Naive thymus-derived CD4-positive, alpha-beta T cell (primary cell): ENCODE measurements at regions of chr7 and their contacts with region 1.

Region 1: DNA sequence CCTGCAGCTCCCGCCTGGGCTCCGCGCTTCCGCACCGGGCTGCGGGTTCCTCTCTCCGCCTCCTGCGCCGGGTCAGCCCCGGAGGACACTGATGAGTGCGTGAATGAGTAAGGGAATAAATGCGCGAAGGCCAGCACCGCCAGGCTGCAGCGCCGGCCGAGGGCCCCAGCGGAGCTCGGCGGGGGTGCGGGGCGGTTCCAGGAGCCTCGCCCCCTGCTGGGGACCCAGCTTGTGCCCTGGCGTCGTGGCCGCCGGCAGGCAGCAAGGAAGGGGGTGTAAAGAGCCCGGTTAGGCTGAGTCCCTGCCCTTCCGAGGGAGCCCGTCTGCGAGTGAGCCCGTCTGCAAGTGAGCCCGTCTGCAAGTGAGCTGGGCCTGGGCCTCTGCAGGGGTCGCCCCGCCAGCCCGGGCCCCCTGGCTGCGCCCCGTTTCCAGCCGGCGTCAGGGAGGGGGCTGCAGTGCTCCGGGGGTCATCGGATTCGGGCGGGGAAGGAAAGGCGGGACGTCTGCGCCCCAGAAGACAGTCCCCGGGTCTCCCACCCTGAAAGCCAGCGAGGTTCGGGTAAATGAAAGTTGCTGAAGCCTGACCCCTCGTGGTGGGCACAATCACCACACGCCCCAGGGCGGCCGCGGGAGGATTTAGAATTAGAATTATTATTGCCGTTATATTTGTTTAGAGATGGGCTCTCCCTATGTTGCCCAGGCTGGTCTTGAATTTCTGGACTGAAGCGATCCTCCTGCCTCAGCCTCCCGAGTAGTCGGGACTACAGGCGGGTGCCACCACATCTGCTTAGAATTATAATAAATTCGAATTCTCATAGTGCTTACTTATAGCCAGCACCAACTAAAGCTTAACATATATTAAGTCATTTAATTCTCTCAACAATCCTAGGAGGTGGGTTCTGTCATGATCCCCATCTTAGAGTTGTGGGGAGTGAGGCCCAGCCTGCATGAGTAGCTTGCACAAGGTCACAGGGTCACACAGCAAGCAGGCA is 8.6 kb upstream of the CRYGN start:
- DNase-seq: peak; percentile 67 to 87 (median 83)
- ATAC-seq: peak; percentile 92
- H3K4me3 ChIP-seq: peak overlapping the region; percentile 68
- H3K4me3 Mint-ChIP-seq: peak overlapping the region; percentile 69 to 88 (median 80)
- H3K27ac ChIP-seq: peak overlapping the region; percentile 64
- H3K27ac Mint-ChIP-seq: peak overlapping the region in 6 of 9 donors; percentile 28 to 88 (median 42)
- H3K4me1 ChIP-seq: peaks cover 0 to 3% of the 10 kb centered on the region in 2 donors
- H3K4me1 Mint-ChIP-seq: peaks cover 0 to 32% (median 8%) of the 10 kb centered on the region in 7 donors
- H3K27me3 ChIP-seq: no peaks in the 10 kb centered on the region
- H3K27me3 Mint-ChIP-seq: peaks cover 0 to 23% (median 4%) of the 10 kb centered on the region in 5 donors

Region 2: GRCh38 chr7:151361193-151361959 is 87.2 kb before region 1 on chr7:
- CTCF ChIA-PET with region 1: interaction called, 130 read pairs
- POLR2A ChIA-PET with region 1: interaction called, 3 read pairs
- intact Hi-C with region 1: no loop called
- DNase-seq: no peak
- ATAC-seq: no peak
- H3K4me3 ChIP-seq: no peak overlapping the region
- H3K4me3 Mint-ChIP-seq: no peak overlapping the region
- H3K27ac ChIP-seq: no peak overlapping the region
- H3K27ac Mint-ChIP-seq: no peak overlapping the region
- H3K4me1 ChIP-seq: no peaks in the 10 kb centered on the region
- H3K4me1 Mint-ChIP-seq: peaks cover 0 to 14% (median 3%) of the 10 kb centered on the region in 7 donors
- H3K27me3 ChIP-seq: no peaks in the 10 kb centered on the region
- H3K27me3 Mint-ChIP-seq: no peaks in the 10 kb centered on the region

Region 3: DNA sequence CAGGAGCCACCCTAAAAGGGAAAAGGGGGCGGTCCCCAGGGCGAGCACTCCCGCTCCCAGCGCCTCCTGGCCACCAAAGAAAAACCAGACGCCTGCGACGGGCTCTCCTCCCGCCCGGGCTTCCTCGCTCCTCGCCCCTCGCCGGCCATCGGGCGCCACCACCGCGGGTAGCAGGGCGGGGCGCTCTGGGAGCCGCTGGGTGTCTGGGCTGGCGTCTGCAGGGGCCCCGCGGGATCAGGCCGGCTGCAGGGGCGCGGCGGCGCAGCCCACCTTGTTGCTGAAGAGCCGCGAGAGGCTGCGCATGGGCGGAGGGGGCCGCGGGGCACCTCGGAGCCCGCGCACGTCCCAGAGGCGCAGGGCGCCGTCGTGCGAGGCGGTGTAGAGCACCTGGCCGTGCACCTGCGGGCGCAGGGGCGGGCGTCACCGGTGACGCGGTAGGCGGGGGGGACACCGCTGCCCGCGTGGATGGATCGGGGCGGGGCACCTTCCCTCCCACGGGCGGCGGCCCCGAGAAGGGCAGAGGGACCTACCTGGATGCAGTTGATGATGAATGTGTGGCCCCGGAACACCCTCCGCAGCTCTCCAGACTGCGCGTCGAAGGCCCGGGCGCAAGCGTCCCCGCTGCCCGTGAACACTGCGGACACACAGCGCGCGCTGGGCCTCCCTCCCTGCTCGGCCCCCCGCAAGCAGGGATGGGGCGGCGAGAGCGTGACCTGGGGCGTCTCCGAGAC is 67.0 kb before region 1 on chr7:
- CTCF ChIA-PET with region 1: interaction called, 4 read pairs
- POLR2A ChIA-PET with region 1: interaction called, 3 read pairs
- intact Hi-C with region 1: loop called in 1 of 2 experiments (anchors 5 kb)
- DNase-seq: peak in 8 of 9 donors; percentile 39 to 72 (median 54)
- ATAC-seq: peak; percentile 86
- H3K4me3 ChIP-seq: peak overlapping the region; percentile 63
- H3K4me3 Mint-ChIP-seq: peak overlapping the region in 9 of 10 donors; percentile 16 to 90 (median 77)
- H3K27ac ChIP-seq: peak overlapping the region; percentile 62
- H3K27ac Mint-ChIP-seq: peak overlapping the region in 2 of 9 donors; percentile 36 to 80
- H3K4me1 ChIP-seq: peaks cover 12 to 19% of the 10 kb centered on the region in 2 donors
- H3K4me1 Mint-ChIP-seq: peaks cover 6 to 14% (median 9%) of the 10 kb centered on the region in 7 donors
- H3K27me3 ChIP-seq: peaks cover 0 to 6% of the 10 kb centered on the region in 2 donors
- H3K27me3 Mint-ChIP-seq: peaks cover 4 to 29% (median 6%) of the 10 kb centered on the region in 5 donors

Region 4: DNA sequence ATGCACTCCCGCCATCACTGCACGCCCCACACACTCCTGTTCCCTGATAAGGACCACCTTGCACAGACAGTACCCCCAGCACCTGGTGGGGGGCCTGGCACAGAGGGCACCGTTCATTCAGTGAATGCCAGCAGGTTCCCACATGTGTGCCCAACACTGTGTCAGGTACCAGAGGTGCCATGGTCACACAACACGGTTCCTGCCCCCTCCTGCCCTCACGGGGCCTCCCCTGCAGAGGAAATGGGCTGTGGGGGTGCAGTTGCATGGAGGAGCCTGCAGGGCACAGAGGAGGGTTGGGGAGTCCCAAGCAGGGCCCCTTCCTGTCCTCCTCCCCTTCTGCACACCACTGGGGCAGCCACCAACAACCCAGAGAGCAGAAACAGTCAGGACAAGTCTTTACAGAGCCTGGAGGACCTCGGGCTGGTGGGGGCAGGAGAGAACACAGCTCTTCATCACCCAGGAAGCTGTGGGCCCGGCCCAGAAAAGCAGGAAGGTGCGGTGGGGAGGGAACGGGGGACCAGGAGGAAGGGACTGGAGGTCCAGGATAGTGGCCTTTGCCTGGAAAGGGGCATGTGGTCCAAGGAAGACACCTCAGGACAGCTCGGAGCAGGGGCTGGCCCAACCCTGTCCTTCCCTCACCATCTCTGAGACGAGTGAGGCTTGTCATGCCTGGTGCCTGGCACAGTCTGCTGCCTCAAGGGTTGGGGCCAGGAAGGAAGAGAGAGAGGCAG is 15.6 kb before region 1 on chr7:
- CTCF ChIA-PET with region 1: interaction called, 19 read pairs
- POLR2A ChIA-PET with region 1: interaction called, 11 read pairs
- intact Hi-C with region 1: loop called (anchors 1 kb)
- DNase-seq: peak in 7 of 9 donors; percentile 29 to 55 (median 53)
- ATAC-seq: peak; percentile 69
- H3K4me3 ChIP-seq: no peak overlapping the region
- H3K4me3 Mint-ChIP-seq: peak overlapping the region; percentile 8 to 79 (median 62)
- H3K27ac ChIP-seq: peak overlapping the region; percentile 25
- H3K27ac Mint-ChIP-seq: peak overlapping the region; percentile 54 to 90 (median 81)
- H3K4me1 ChIP-seq: peaks cover 51 to 62% of the 10 kb centered on the region in 2 donors
- H3K4me1 Mint-ChIP-seq: peaks cover 25 to 72% (median 52%) of the 10 kb centered on the region in 7 donors
- H3K27me3 ChIP-seq: no peaks in the 10 kb centered on the region
- H3K27me3 Mint-ChIP-seq: no peaks in the 10 kb centered on the region

Region 5: DNA sequence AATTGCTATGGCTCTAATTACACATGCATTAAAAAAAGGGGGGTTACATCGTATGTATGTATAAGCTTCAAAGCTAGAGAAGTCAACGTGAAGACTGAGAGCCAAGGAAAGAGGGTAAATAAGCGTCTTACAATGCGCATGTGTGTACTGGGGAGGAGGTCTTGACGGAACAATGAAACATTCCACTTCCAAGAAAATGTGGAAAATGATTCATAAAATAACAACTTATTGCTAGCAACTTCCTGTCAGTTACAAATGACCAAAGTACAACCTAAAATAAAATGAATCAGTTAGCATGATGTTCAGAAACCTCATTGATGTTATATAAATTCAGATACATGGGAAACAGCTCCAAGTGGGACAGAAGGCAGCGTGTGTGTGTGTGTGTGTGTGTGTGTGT is 175.2 kb after region 1 on chr7:
- CTCF ChIA-PET with region 1: no interaction called
- POLR2A ChIA-PET with region 1: no interaction called
- intact Hi-C with region 1: no loop called
- DNase-seq: no peak
- ATAC-seq: no peak
- H3K4me3 ChIP-seq: no peak overlapping the region
- H3K4me3 Mint-ChIP-seq: no peak overlapping the region
- H3K27ac ChIP-seq: no peak overlapping the region
- H3K27ac Mint-ChIP-seq: no peak overlapping the region
- H3K4me1 ChIP-seq: no peaks in the 10 kb centered on the region
- H3K4me1 Mint-ChIP-seq: peaks cover 19 to 49% (median 40%) of the 10 kb centered on the region in 7 donors
- H3K27me3 ChIP-seq: no peaks in the 10 kb centered on the region
- H3K27me3 Mint-ChIP-seq: no peaks in the 10 kb centered on the region